A673 (cell line): ENCODE measurements at regions of chr18 and their contacts with region 1.

Region 1: DNA sequence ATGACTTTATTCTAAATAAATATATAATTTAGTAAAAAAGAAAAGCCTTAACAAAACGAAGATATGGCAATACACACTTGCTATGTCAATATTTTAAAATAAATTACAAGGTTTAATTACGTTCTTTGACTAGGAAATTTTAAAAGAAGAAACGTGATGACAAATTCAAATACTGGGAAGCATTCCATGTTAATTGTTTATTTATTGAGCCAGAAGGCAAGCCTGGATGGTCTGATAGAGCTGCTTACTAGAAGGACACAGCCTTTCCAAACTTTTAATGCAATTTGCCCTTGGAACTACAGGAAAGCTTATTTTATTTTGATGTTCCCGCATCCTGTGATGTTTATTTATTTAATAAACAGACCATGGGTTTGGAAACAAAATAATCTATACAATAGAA is 33.4 kb upstream of the DSEL start:
- DNase-seq: no peak
- H3K4me3 ChIP-seq: no peak overlapping the region
- H3K27ac ChIP-seq: no peak overlapping the region
- H3K4me1 ChIP-seq: no peaks in the 10 kb centered on the region
- H3K27me3 ChIP-seq: no peaks in the 10 kb centered on the region
- CTCF ChIP-seq: no peak

Region 2: GRCh38 chr18:67599277-67599676 is 49.3 kb after region 1 on chr18:
- CTCF ChIA-PET with region 1: no interaction called
- POLR2A ChIA-PET with region 1: no interaction called
- intact Hi-C with region 1: loop called (anchors 5 kb)
- DNase-seq: peak; percentile 25
- H3K4me3 ChIP-seq: no peak overlapping the region
- H3K27ac ChIP-seq: peak overlapping the region; percentile 37
- H3K4me1 ChIP-seq: peaks cover 25% of the 10 kb centered on the region
- H3K27me3 ChIP-seq: no peaks in the 10 kb centered on the region
- CTCF ChIP-seq: no peak